Activated CD4-positive, alpha-beta memory T cell treated with anti-CD3 and anti-CD28 coated beads for 36 hours (primary cell): ENCODE measurements at regions of chr3 and their contacts with region 1.

Region 1: GRCh38 chr3:15268033-15268631 is 62.1 kb downstream of the CAPN7 start:
- DNase-seq: peak; percentile 91
- H3K4me3 Mint-ChIP-seq: no peak overlapping the region
- H3K27ac Mint-ChIP-seq: peak overlapping the region; percentile 65
- H3K4me1 Mint-ChIP-seq: peaks cover 79% of the 10 kb centered on the region
- H3K27me3 Mint-ChIP-seq: no peaks in the 10 kb centered on the region

Region 2: DNA sequence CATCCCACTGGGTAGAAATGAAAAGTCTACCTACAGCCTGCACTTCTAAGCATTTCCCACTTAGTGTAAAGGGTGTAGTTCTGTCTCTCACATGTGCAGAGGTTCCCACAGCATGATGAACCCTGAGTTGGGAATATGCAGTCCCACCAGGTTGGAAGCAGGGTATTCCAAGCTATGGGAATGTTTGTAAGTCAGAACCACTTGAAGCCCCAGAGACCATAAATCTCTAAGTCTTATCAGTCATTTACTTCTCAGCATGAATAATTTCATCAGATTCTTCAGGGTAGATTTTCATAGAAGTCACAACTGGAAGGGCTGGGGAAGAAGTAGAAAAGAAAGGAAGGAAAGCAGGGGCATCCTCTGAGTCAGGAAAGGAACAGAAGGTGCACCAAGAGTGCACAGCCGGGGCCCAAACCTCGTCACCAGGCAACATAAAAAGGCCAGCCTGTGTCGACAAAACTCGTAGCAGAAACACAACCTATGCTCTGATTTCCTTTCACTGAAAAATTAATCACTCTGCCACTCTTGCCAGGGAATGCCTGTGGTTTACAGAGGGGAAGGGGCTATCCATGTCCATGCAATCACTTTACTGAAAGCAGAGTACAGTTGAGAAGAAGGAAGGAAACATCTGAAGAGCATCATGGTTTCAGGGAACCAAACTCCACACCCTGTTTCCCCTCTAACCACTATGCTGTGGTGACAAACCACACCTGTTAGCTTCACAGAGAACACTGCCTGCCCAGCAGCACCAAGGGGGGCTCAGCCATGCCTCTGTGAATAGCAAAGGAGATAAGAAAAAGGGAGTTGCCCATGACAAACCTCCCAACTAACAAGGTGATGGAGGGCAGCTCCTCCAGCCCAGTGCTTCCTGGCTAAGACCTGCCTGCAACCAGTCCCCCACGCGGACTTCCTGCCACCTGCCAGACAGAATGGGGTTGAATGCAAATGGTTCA is 23.7 kb after region 1 on chr3:
- CTCF ChIA-PET with region 1: interaction called, 27 read pairs
- POLR2A ChIA-PET with region 1: interaction called, 6 read pairs
- intact Hi-C with region 1: no loop called
- DNase-seq: peak; percentile 83
- H3K4me3 Mint-ChIP-seq: peak overlapping the region; percentile 42
- H3K27ac Mint-ChIP-seq: peak overlapping the region; percentile 87
- H3K4me1 Mint-ChIP-seq: peaks cover 77% of the 10 kb centered on the region
- H3K27me3 Mint-ChIP-seq: no peaks in the 10 kb centered on the region

Region 3: GRCh38 chr3:15319575-15319974 is 51.4 kb after region 1 on chr3:
- CTCF ChIA-PET with region 1: interaction called, 23 read pairs
- POLR2A ChIA-PET with region 1: interaction called, 5 read pairs
- intact Hi-C with region 1: no loop called
- DNase-seq: no peak
- H3K4me3 Mint-ChIP-seq: no peak overlapping the region
- H3K27ac Mint-ChIP-seq: peak overlapping the region; percentile 52
- H3K4me1 Mint-ChIP-seq: peaks cover 83% of the 10 kb centered on the region
- H3K27me3 Mint-ChIP-seq: no peaks in the 10 kb centered on the region

Region 4: GRCh38 chr3:15361494-15362212 is 93.5 kb after region 1 on chr3:
- CTCF ChIA-PET with region 1: interaction called, 46 read pairs
- POLR2A ChIA-PET with region 1: interaction called, 17 read pairs
- intact Hi-C with region 1: loop called (anchors 1 kb)
- DNase-seq: peak; percentile 85
- H3K4me3 Mint-ChIP-seq: peak overlapping the region; percentile 48
- H3K27ac Mint-ChIP-seq: peak overlapping the region; percentile 85
- H3K4me1 Mint-ChIP-seq: peaks cover 54% of the 10 kb centered on the region
- H3K27me3 Mint-ChIP-seq: no peaks in the 10 kb centered on the region

Region 5: GRCh38 chr3:15384510-15385237 is 116.5 kb after region 1 on chr3:
- CTCF ChIA-PET with region 1: interaction called, 151 read pairs
- POLR2A ChIA-PET with region 1: interaction called, 4 read pairs
- intact Hi-C with region 1: no loop called
- DNase-seq: no peak
- H3K4me3 Mint-ChIP-seq: no peak overlapping the region
- H3K27ac Mint-ChIP-seq: no peak overlapping the region
- H3K4me1 Mint-ChIP-seq: peaks cover 6% of the 10 kb centered on the region
- H3K27me3 Mint-ChIP-seq: no peaks in the 10 kb centered on the region